Naive thymus-derived CD8-positive, alpha-beta T cell (primary cell): ENCODE measurements at regions of chr19 and their contacts with region 1.

Region 1: DNA sequence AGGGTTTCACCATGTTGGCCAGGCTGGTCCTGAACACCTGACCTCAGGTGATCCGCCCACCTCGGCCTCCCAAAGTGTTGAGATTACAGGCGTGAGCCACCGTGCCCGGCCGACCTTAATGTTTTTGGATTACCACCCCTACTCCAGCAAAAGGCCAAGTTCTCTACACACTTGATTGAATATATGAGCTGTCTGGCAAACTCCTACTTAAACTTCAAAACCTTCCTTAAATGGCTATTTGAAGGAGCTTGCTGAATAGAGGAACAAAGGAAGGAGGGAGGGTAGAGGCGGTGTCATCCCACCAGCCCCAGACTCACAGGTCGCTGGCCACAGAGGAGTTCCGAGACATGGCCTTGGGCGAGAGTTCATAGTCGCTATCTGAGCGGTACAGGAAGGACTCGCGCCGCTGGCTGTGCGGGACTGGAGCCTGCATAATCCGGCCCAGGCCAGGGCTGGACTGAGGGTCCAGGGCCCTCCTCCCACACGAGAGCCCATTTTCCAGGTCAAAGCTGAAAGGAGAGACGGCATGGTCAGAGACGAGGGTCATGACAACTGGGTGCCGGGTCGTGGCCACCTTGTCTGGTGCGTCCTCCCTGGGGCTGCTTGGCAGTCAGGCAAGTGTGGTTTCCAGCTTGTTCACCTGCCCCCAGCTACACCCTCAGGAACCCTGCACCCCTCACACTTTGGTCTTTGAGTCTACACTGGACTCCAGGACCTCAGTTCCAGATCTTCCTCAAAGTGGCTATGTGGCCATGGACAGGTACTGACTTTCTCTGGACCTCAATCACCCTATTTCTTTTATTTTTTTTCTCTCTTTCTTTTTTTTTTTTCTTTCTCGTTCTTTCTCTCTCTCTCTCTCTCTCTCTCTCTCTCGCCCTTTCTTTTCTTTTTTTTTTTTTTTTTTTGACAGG is 4.2 kb downstream of the PDE4C start:
- DNase-seq: no peak
- ATAC-seq: no peak
- H3K4me3 Mint-ChIP-seq: no peak overlapping the region
- H3K27ac Mint-ChIP-seq: peak overlapping the region in 1 of 10 donors; percentile 19
- H3K4me1 Mint-ChIP-seq: peaks cover 13 to 34% (median 24%) of the 10 kb centered on the region in 4 donors
- H3K27me3 Mint-ChIP-seq: peaks cover 16 to 69% (median 38%) of the 10 kb centered on the region in 5 donors

Region 2: DNA sequence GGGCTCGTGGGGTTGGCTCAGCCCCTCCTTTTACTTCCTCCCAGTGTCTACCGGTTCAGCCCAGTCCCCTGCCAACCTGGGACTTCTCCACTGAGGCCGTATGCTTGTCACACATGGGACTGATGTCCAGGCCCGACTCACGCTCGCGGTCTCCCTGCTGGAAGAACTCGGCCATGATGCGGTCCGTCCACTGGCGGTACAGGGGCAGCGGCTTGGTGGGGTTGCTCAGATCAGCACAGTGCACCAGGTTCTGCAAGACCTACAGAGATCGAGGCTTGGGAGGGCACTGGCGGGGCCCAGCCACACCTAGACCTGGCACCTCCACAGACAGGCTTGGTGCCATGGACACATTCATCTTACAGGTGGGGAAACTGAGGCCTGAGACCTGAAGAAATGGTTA is 10.4 kb before region 1 on chr19:
- POLR2A ChIA-PET with region 1: no interaction called
- DNase-seq: no peak
- ATAC-seq: no peak
- H3K4me3 Mint-ChIP-seq: no peak overlapping the region
- H3K27ac Mint-ChIP-seq: no peak overlapping the region
- H3K4me1 Mint-ChIP-seq: peaks cover 0 to 5% (median 0%) of the 10 kb centered on the region in 4 donors
- H3K27me3 Mint-ChIP-seq: peaks cover 0 to 20% (median 10%) of the 10 kb centered on the region in 5 donors

Region 3: GRCh38 chr19:18269070-18269723 is 47.1 kb after region 1 on chr19:
- POLR2A ChIA-PET with region 1: interaction called, 11 read pairs
- DNase-seq: no peak
- ATAC-seq: no peak
- H3K4me3 Mint-ChIP-seq: no peak overlapping the region
- H3K27ac Mint-ChIP-seq: peak overlapping the region in 3 of 10 donors; percentile 29 to 87 (median 62)
- H3K4me1 Mint-ChIP-seq: peaks cover 9 to 24% (median 14%) of the 10 kb centered on the region in 4 donors
- H3K27me3 Mint-ChIP-seq: no peaks in the 10 kb centered on the region